ENCODE measurements at regions of chr4 and their contacts with region 1.

Region 1: GRCh38 chr4:67151376-67152343 is 393.6 kb downstream of the CENPC start:
- DNase-seq: no peak
- H3K4me3 ChIP-seq: no peak overlapping the region
- H3K27ac ChIP-seq: no peak overlapping the region
- H3K4me1 ChIP-seq: no peaks in the 10 kb centered on the region
- H3K27me3 ChIP-seq: no peaks in the 10 kb centered on the region
- CTCF ChIP-seq: no peak
- EP300 ChIP-seq: no peak
- POLR2A ChIP-seq: no peak
- RAD21 ChIP-seq: no peak

Region 2: GRCh38 chr4:67141586-67141985 is 10.1 kb before region 1 on chr4:
- CTCF ChIA-PET with region 1: interaction called, 11 read pairs
- POLR2A ChIA-PET with region 1: no interaction called
- DNase-seq: no peak
- H3K4me3 ChIP-seq: no peak overlapping the region
- H3K27ac ChIP-seq: no peak overlapping the region
- H3K4me1 ChIP-seq: no peaks in the 10 kb centered on the region
- H3K27me3 ChIP-seq: no peaks in the 10 kb centered on the region
- CTCF ChIP-seq: no peak
- EP300 ChIP-seq: no peak
- POLR2A ChIP-seq: no peak
- RAD21 ChIP-seq: no peak

Region 3: DNA sequence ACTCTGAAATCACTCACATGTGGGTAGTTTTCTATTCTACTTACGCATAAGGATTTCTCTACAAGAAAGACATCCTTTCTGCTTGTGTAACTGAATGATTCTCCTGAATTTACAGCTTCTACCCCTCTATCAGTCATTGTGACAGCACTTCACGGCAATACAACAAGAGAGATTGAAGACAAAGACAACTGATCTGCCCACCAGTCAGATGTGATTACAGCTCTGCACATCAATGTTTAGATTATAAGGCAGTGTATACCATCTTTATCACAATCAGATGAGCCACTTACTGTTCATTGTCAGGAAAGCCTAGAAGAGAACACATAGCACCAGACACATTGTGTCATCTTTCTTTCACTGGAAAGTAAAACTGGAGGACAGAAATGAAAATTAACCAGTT is 69.2 kb after region 1 on chr4:
- CTCF ChIA-PET with region 1: no interaction called
- POLR2A ChIA-PET with region 1: no interaction called
- DNase-seq: no peak
- H3K4me3 ChIP-seq: no peak overlapping the region
- H3K27ac ChIP-seq: no peak overlapping the region
- H3K4me1 ChIP-seq: no peaks in the 10 kb centered on the region
- H3K27me3 ChIP-seq: no peaks in the 10 kb centered on the region
- CTCF ChIP-seq: no peak
- EP300 ChIP-seq: no peak
- POLR2A ChIP-seq: no peak
- RAD21 ChIP-seq: no peak